ENCODE measurements at regions of chr12 and their contacts with region 1.

Region 1: GRCh38 chr12:109982210-109982609 is 14.0 kb downstream of the GIT2 start:
- DNase-seq: no peak
- H3K4me3 ChIP-seq: no peak overlapping the region
- H3K27ac ChIP-seq: no peak overlapping the region
- H3K4me1 ChIP-seq: no peaks in the 10 kb centered on the region
- CTCF ChIP-seq: no peak

Region 2: GRCh38 chr12:109944561-109945359 is 37.5 kb before region 1 on chr12:
- CTCF ChIA-PET with region 1: no interaction called
- POLR2A ChIA-PET with region 1: interaction called, 4 read pairs
- intact Hi-C with region 1: loop called (anchors 5 kb)
- DNase-seq: no peak
- H3K4me3 ChIP-seq: no peak overlapping the region
- H3K27ac ChIP-seq: no peak overlapping the region
- H3K4me1 ChIP-seq: peaks cover 10% of the 10 kb centered on the region
- CTCF ChIP-seq: no peak

Region 3: GRCh38 chr12:110577717-110578521 is 595.7 kb after region 1 on chr12:
- CTCF ChIA-PET with region 1: no interaction called
- POLR2A ChIA-PET with region 1: no interaction called
- intact Hi-C with region 1: no loop called
- DNase-seq: no peak
- H3K4me3 ChIP-seq: peak overlapping the region; percentile 86
- H3K27ac ChIP-seq: no peak overlapping the region
- H3K4me1 ChIP-seq: peaks cover 39% of the 10 kb centered on the region
- CTCF ChIP-seq: no peak